ENCODE measurements at regions of chr1 and their contacts with region 1.

Region 1: GRCh38 chr1:225441314-225442122 is 13.7 kb upstream of the LBR start:
- DNase-seq: peak; percentile 58 to 66 (median 62)
- ATAC-seq: peak; percentile 77
- H3K4me3 ChIP-seq: no peak overlapping the region
- H3K27ac ChIP-seq: peak overlapping the region; percentile 20 to 78 (median 70)
- H3K4me1 ChIP-seq: peaks cover 62% of the 10 kb centered on the region
- H3K27me3 ChIP-seq: no peaks in the 10 kb centered on the region
- CTCF ChIP-seq: peak; percentile 24 to 74 (median 68)
- POLR2A ChIP-seq: no peak

Region 2: DNA sequence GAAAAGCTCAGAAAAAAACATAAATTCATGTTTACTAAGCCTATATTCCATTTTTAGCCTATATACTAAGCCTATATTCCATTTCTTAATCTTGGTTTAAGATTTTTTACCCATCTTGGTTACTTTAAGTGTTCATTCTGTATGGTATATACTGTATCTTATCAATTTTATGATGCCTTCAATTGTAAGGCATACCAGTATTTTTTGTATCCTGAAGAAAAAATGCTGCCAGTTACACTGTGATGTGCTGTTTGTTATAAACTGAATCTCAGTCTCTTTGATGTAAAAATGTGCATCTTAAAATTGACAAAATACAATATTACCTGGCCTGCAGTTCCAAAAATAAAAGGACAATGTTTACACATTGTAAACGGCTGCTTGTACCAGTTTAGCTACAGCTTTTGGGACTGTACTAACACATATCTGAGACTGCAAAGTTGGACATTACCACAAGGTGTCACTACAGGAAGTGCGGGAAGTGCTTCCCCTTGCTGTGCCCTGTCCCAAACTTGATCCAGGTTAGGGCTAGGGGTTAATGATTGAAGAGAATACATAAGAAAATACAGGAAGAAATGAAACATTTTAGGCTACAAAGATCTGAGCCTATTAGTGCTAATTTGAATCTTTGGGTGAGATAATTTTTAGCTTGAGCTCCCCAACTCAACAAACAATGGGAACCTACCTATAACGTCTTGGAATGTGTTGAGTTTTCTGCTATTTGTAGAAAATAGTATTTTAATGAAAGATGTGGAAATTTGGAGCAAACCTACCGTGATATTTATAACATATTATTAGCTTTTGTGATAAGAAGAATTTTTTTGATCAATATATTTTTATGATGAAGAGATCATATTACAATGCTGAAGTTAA is 122.6 kb before region 1 on chr1:
- intact Hi-C with region 1: loop called (anchors 10 kb)
- DNase-seq: peak; percentile 46 to 72 (median 58)
- ATAC-seq: peak; percentile 92
- H3K4me3 ChIP-seq: no peak overlapping the region
- H3K27ac ChIP-seq: no peak overlapping the region
- H3K4me1 ChIP-seq: no peaks in the 10 kb centered on the region
- H3K27me3 ChIP-seq: no peaks in the 10 kb centered on the region
- CTCF ChIP-seq: peak; percentile 45 to 80 (median 70)
- POLR2A ChIP-seq: no peak

Measured in body of pancreas (tissue), 4 donors.